MCF 10A (cell line): ENCODE measurements at regions of chr1 and their contacts with region 1.

Region 1: GRCh38 chr1:245585252-245585959 is 430.6 kb downstream of the KIF26B start:
- DNase-seq: peak; percentile 67
- H3K4me3 Mint-ChIP-seq: no peak overlapping the region
- H3K27ac Mint-ChIP-seq: no peak overlapping the region
- H3K4me1 Mint-ChIP-seq: peaks cover 7% of the 10 kb centered on the region
- H3K27me3 Mint-ChIP-seq: peaks cover 31% of the 10 kb centered on the region
- CTCF ChIP-seq: no peak

Region 2: DNA sequence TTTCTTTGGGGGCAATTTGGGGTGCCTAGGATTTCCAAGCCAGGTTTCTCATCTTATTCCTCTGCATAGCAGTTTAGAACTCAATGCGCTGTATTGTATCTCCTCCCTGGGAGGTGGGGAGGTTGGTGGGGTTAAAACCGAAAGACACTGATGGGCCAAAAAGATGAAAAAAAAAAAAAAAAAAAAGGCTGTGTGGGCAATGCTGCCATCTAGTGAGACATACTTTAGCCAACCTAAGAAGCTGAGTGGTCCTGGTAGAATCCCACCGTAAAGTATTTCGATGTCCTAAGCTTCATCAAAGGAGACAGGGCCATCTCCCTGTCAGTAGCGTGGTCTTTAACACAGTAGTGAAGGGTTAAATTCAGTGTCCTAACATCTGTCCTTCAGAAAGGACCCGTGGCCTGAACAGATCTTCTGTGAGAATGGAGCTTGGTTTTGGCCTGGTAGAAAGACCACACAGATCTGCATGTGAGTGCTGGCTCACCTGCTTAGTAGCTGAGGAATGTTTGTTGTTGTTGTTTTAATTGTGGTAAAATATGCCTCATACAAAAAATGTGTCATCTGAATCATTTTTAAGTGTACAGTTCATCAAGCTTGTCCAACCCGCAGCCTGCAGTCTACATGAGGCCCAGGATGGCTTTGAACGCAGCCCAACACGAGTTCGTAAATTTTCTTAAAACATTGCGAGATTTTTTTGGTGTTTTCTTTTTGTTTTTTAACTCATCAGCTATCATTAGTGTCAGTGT is 204.4 kb before region 1 on chr1:
- CTCF ChIA-PET with region 1: no interaction called
- POLR2A ChIA-PET with region 1: no interaction called
- intact Hi-C with region 1: loop called (anchors 5 kb)
- DNase-seq: no peak
- H3K4me3 Mint-ChIP-seq: no peak overlapping the region
- H3K27ac Mint-ChIP-seq: no peak overlapping the region
- H3K4me1 Mint-ChIP-seq: no peaks in the 10 kb centered on the region
- H3K27me3 Mint-ChIP-seq: peaks cover 36% of the 10 kb centered on the region
- CTCF ChIP-seq: no peak

Region 3: GRCh38 chr1:245419461-245419978 is 165.9 kb before region 1 on chr1:
- CTCF ChIA-PET with region 1: no interaction called
- POLR2A ChIA-PET with region 1: no interaction called
- intact Hi-C with region 1: no loop called
- DNase-seq: no peak
- H3K4me3 Mint-ChIP-seq: no peak overlapping the region
- H3K27ac Mint-ChIP-seq: no peak overlapping the region
- H3K4me1 Mint-ChIP-seq: no peaks in the 10 kb centered on the region
- H3K27me3 Mint-ChIP-seq: peaks cover 65% of the 10 kb centered on the region
- CTCF ChIP-seq: no peak